ENCODE measurements at regions of chr3 and their contacts with region 1.

Region 1: DNA sequence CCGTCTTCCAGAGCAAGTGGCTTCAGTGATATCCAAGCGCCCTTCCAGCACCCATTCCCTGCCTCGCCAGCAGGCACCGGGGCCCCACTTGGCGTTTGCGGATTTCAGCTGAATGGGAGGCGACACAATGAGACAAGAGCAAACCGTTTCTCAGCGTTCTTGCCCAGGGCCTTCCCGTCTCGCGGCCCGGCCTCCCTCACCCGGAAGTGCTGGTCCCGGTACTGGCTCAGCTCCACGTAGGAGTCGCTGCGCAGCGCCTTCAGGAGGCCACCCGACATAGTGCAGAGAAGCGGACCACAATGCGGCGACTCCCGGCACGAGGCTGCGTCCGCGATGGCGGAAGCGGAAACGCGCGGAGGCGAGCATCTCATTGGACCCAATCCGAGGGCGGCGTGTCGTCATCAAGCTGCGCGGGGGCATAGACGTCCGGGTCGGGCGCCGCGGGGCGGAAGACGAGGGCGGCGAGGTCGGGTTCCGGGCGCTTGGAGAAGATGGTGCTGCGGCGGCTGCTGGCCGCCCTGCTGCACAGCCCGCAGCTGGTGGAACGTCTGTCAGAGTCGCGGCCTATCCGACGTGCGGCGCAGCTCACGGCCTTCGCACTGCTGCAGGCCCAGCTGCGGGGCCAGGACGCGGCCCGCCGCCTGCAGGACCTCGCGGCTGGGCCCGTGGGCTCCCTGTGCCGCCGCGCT is at the start of gene NCBP2:
- DNase-seq: peak; percentile 98
- H3K4me3 ChIP-seq: peak within 1 kb of the TSS; percentile 73 to 93 (median 85)
- H3K27ac ChIP-seq: peak within 1 kb of the TSS; percentile 76
- H3K4me1 ChIP-seq: peaks cover 16% of the 10 kb centered on the region
- H3K27me3 ChIP-seq: no peaks in the 10 kb centered on the region
- CTCF ChIP-seq: peak; percentile 64 to 81
- POLR2A ChIP-seq: peak; percentile 90
- total RNA-seq, gene NCBP2: 73.4 and 76.1 TPM in 2 replicates

Region 2: DNA sequence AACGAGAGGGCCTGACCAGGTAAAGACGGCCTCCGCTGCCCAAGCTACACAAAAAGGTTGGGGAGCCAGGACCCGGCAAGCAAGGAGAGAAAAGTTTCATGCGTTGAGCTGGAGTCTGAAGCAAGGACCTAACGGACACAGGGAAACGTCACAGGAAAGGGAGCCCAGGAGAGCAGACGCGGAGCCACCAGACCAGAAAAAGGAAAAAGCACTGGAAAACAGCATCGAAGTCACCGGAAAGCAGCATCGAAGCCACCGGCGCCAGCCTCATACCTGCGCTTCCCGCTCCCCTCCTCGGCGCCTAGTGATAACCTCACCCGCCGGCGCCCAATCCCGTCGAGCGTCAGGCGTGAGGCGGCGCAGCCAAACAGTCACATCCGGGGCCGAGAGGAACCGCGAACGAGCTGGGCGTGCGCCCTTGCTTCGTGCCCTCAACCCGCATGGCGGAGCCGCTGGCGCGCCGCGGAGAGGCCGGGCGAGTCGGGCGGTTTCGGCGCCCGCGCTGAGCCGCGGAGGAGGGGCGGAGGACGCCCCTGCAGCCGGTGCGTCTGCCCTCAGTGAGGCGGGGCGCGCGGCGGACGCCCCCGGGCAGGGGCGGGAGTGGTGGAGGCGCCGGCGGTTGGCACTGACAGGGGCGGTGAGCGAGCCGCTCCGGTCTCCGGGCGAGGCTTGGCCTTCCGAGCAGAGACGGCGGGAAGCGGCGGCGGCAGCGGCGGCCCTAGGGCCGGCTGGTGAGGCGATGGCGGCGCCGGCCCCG is 373.9 kb before region 1 on chr3 and contains the starts of genes FBXO45 and WDR53:
- CTCF ChIA-PET with region 1: no interaction called
- POLR2A ChIA-PET with region 1: no interaction called
- dilution Hi-C with region 1: no loop called
- intact Hi-C with region 1: loop called (anchors 2 kb)
- DNase-seq: peak; percentile 97
- H3K4me3 ChIP-seq: peak within 1 kb of the TSS; percentile 24 to 95 (median 57)
- H3K27ac ChIP-seq: peak within 1 kb of the TSS; percentile 34
- H3K4me1 ChIP-seq: peaks cover 26% of the 10 kb centered on the region
- H3K27me3 ChIP-seq: no peaks in the 10 kb centered on the region
- CTCF ChIP-seq: no peak
- POLR2A ChIP-seq: peak; percentile 80
- total RNA-seq, gene FBXO45: 12.4 and 13.4 TPM in 2 replicates
- total RNA-seq, gene WDR53: 13.0 and 15.3 TPM in 2 replicates

Region 3: GRCh38 chr3:196650740-196651311 is 291.5 kb before region 1 on chr3:
- CTCF ChIA-PET with region 1: no interaction called
- POLR2A ChIA-PET with region 1: no interaction called
- dilution Hi-C with region 1: no loop called
- intact Hi-C with region 1: no loop called
- DNase-seq: peak; percentile 98
- H3K4me3 ChIP-seq: no peak overlapping the region
- H3K27ac ChIP-seq: no peak overlapping the region
- H3K4me1 ChIP-seq: peaks cover 24% of the 10 kb centered on the region
- H3K27me3 ChIP-seq: no peaks in the 10 kb centered on the region
- CTCF ChIP-seq: no peak
- POLR2A ChIP-seq: no peak

Region 4: DNA sequence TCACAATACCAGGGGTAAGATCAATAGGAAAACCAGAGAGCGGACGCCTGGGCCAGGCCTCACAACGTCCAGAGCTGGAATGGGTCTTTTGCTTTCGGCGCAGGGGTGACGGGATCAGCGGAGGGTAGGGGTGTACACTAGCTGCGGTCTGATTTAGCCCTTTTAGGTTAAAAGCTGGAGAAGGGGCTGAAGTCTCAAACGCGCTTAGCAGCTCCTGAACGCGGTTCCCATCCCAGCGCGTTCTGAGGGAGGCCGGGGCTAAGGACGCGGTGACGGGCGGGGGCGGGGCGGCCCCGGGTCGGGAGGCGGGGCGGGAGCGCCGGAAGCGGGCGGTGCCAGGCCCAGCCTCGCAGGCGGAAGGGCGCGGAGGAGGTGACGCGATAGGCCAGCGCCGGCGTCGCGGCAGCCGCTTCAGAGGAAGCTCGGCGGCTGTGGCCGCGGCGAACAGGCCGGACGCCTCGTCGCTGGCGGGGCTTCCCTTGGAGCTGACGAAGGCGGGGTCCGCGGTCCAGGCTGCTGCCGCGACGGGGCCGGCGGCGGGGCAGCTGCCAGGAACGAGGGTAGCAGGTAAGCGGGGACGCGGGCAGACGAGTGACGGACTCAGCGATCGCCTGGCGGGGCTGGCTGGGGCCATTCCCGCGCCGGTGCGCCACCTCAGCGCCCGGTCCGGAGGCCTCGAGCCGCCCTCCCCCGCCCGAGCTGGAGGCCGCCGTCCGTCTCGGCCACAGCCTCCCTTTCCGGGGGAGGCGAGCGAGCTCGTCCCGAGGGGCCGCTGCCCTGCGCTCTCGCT is 74.7 kb before region 1 on chr3 and contains the start of gene SENP5:
- CTCF ChIA-PET with region 1: interaction called, 12 read pairs
- POLR2A ChIA-PET with region 1: interaction called, 5 read pairs
- dilution Hi-C with region 1: no loop called
- intact Hi-C with region 1: loop called (anchors 1 kb)
- DNase-seq: peak; percentile 91
- H3K4me3 ChIP-seq: peak within 1 kb of the TSS; percentile 50 to 91 (median 73)
- H3K27ac ChIP-seq: peak within 1 kb of the TSS; percentile 73
- H3K4me1 ChIP-seq: peaks cover 10% of the 10 kb centered on the region
- H3K27me3 ChIP-seq: no peaks in the 10 kb centered on the region
- CTCF ChIP-seq: no peak
- POLR2A ChIP-seq: peak; percentile 97
- total RNA-seq, gene SENP5: 31.1 and 33.5 TPM in 2 replicates